ENCODE measurements at regions of chr18 and their contacts with region 1.

Region 1: DNA sequence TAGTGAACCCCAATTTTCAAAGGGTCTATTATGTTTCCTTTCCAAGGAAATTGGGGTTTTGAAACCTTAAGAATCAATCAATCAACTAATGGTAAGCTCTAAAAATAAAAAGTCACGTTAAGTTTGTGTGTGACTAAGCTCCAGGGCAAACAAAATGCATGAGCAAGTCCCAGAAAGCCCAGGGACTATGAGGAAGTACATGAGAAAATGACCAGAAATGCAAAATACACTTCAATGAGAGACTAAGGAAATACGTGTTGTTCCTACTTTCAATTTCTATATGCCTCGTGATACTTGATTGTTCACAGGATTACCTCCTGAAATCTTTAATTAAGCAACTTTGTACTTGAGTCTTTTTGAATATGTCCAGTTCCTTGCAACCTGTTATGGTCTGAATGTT is 684.4 kb upstream of the SYT4 start:
- DNase-seq: no peak
- ATAC-seq: no peak
- H3K4me3 ChIP-seq: no peak overlapping the region
- H3K27ac ChIP-seq: no peak overlapping the region
- H3K4me1 ChIP-seq: no peaks in the 10 kb centered on the region
- H3K27me3 ChIP-seq: no peaks in the 10 kb centered on the region
- CTCF ChIP-seq: no peak
- POLR2A ChIP-seq: no peak
- RAD21 ChIP-seq: no peak

Region 2: GRCh38 chr18:44067186-44067585 is 105.5 kb after region 1 on chr18:
- CTCF ChIA-PET with region 1: no interaction called
- POLR2A ChIA-PET with region 1: no interaction called
- dilution Hi-C with region 1: no loop called
- in situ Hi-C with region 1: no loop called
- intact Hi-C with region 1: loop called (anchors 5 kb)
- DNase-seq: no peak
- ATAC-seq: no peak
- H3K4me3 ChIP-seq: no peak overlapping the region
- H3K27ac ChIP-seq: no peak overlapping the region
- H3K4me1 ChIP-seq: no peaks in the 10 kb centered on the region
- H3K27me3 ChIP-seq: no peaks in the 10 kb centered on the region
- CTCF ChIP-seq: no peak
- POLR2A ChIP-seq: no peak
- RAD21 ChIP-seq: no peak

Measured in IMR-90 (cell line).